ENCODE measurements at regions of chr15 and their contacts with region 1.

Region 1: GRCh38 chr15:65610871-65611718 is at the start of gene INTS14:
- DNase-seq: peak; percentile 91
- ATAC-seq: peak; percentile 99
- H3K4me3 ChIP-seq: peak within 1 kb of the TSS; percentile 72 to 91
- H3K27ac ChIP-seq: peak within 1 kb of the TSS; percentile 82
- H3K4me1 ChIP-seq: peaks cover 15 to 19% of the 10 kb centered on the region in 2 experiments
- H3K27me3 ChIP-seq: no peaks in the 10 kb centered on the region
- CTCF ChIP-seq: peak; percentile 21 to 58 (median 42); a peak in 5 of 6 replicates
- POLR2A ChIP-seq: peak; percentile 79
- RAD21 ChIP-seq: peak; percentile 68
- total RNA-seq, gene INTS14: 50.1 TPM

Region 2: GRCh38 chr15:65077981-65078352 is 533.1 kb before region 1 on chr15:
- CTCF ChIA-PET with region 1: no interaction called
- POLR2A ChIA-PET with region 1: no interaction called
- RAD21 ChIA-PET with region 1: no interaction called
- intact Hi-C with region 1: no loop called
- DNase-seq: peak; percentile 48
- ATAC-seq: peak; percentile 94
- H3K4me3 ChIP-seq: no peak overlapping the region
- H3K27ac ChIP-seq: no peak overlapping the region
- H3K4me1 ChIP-seq: peaks cover 3 to 13% of the 10 kb centered on the region in 2 experiments; a peak in 2 of 4 replicates
- H3K27me3 ChIP-seq: no peaks in the 10 kb centered on the region; the same call in 1 of the 2 replicates
- CTCF ChIP-seq: peak; percentile 47 to 82 (median 53)
- POLR2A ChIP-seq: no peak
- RAD21 ChIP-seq: peak; percentile 67

Region 3: DNA sequence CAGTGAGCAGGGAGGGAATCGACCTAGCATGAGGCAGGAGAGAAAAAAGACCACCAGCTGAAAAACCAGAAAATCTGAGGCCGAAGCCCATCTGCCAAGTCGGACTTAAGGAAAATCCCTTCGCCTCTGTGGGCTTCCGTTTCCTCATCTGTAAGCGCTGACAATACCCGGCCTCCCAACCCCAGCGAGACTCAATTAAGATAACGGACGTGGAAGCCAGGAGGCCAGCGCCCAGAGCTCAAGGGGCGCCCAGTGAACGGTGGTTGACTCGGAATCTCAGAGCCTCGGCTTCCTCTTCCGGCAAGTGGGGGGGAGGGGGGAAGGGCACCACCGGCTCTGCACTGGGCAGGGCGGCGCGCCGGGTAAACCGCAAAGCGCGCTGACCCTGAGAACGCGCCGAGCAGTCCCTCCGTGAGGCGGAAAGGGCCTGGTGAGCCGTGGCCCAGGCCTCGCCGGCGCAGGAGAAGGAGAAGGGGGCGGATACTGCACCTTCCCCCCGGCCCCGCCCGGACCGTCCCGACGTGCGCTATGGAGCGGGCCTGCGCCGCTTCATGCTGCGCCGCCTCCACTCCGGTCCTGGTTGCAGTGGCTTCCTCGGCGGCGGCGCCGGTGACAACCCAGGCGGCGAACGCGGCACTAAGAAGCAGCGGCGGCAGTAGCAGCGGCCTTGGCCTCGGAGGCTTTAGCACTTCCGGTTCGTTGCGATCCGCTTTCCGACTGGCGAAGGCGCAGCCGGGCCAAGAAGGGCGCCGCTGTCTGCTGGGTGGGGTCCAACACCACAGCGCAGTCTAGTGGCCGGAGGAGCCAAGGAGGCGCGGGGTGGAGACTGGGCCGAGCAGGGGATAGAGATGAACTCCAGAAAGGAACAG is 93.9 kb before region 1 on chr15 and contains the start of gene DPP8:
- CTCF ChIA-PET with region 1: no interaction called
- POLR2A ChIA-PET with region 1: no interaction called
- RAD21 ChIA-PET with region 1: no interaction called
- intact Hi-C with region 1: no loop called
- DNase-seq: peak; percentile 89
- ATAC-seq: peak; percentile 97
- H3K4me3 ChIP-seq: peak within 1 kb of the TSS; percentile 64 to 88
- H3K27ac ChIP-seq: peak within 1 kb of the TSS; percentile 90
- H3K4me1 ChIP-seq: peaks cover 14 to 20% of the 10 kb centered on the region in 2 experiments
- H3K27me3 ChIP-seq: no peaks in the 10 kb centered on the region
- CTCF ChIP-seq: peak; percentile 60 to 94 (median 92); a peak in 5 of 6 replicates
- POLR2A ChIP-seq: peak; percentile 75
- RAD21 ChIP-seq: 0 out of 2 replicates have a peak, but pooled peaks have one; percentile 13
- total RNA-seq, gene DPP8: 27.1 TPM

Region 4: DNA sequence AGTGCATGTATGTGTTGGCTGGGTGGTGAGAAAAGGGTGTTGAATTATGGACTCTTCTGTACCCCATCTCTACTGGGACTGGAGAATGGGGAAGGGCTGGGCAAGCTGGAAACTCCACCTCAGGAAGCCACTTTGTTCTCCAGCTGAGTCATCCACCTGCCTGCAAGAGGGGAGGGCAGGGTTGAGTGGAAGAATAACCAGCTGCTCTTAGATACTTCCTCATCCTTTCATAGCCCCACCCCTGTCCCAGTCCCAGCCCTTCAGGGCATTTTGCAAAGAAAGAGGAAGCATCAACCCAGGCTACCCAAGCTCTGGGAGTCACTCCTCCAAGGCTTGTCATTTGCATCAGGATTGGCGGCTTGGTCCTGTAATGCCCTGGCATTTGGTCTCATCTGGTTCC is 291.3 kb after region 1 on chr15:
- CTCF ChIA-PET with region 1: no interaction called
- POLR2A ChIA-PET with region 1: no interaction called
- RAD21 ChIA-PET with region 1: no interaction called
- intact Hi-C with region 1: loop called (anchors 5 kb)
- DNase-seq: peak; percentile 65
- ATAC-seq: peak; percentile 96
- H3K4me3 ChIP-seq: no peak overlapping the region
- H3K27ac ChIP-seq: peak overlapping the region; percentile 26
- H3K4me1 ChIP-seq: peaks cover 21 to 46% of the 10 kb centered on the region in 2 experiments
- H3K27me3 ChIP-seq: no peaks in the 10 kb centered on the region
- CTCF ChIP-seq: no peak
- POLR2A ChIP-seq: no peak
- RAD21 ChIP-seq: no peak

Measured in HCT116 (cell line).